ENCODE measurements at regions of chr19 and their contacts with region 1.

Region 1: GRCh38 chr19:41951686-41952172 is 7.4 kb downstream of the RABAC1 start:
- DNase-seq: peak; percentile 87
- CTCF ChIP-seq: peak; percentile 96

Region 2: DNA sequence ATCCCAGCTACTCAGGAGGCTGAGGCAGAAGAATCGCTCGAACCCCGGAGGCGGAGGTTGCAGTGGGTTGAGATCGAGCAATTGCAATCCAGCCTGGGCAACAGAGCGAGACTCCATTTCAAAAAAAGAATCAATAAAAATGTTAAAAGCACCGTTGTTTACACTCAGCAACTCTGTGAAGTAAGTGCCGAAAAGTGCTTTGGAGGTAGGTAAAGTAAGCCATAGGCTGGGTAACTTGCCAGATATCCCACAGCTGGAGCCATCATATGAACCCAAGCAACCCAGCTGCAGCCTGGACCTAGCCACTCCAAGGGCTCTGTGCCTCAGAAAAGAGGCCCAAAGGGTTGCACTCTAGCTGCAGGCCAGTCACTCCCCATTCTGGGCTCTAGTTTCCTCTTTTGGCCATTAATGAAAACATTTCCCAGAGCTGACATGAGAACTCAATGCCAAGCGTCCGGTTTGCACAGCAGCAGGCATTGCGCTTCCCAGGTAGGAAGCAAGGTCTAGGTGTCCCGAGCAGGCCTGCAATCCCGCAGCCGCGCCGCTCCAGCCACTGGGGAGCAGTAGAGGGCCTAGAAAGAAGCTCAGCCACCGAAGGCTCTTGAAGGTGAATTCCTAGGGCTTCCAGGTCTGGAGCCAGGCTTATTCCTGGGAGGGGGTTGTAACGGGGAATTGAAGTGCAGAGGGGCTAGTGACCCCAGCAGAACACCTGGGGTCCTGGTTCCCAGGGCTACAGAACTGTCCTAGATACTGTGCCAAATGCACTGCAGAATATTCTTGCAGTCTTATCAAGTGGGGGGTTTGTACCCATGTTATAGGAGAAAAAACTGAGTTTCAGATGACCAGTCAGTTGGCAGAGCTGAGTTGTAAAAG is 78.7 kb before region 1 on chr19:
- in situ Hi-C with region 1: loop called (anchors 5 kb)
- DNase-seq: no peak
- CTCF ChIP-seq: peak; percentile 96

Region 3: DNA sequence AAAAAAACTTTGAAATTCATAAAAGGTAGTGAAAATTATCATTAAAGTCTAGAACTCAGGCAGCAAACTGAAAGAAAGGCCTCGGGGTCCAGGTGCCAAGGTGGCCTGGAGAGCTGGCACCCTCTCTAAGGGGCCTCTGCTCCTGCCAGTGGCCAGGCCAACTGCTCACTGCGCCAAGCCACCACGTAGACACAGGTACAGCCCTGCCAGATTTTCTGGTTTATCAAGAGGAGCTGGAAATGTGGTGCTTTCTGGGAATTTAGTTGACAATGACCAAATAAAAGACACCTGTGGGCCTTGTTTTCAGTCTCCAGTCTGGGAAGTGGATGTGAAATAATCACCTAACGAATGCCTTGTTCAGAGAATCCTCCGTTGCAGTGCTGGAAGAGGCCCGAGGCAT is 147.1 kb after region 1 on chr19:
- in situ Hi-C with region 1: no loop called
- DNase-seq: no peak
- CTCF ChIP-seq: no peak